ENCODE measurements at regions of chr13 and their contacts with region 1.

Region 1: GRCh38 chr13:106536244-106537034 is 977 bp upstream of the EFNB2 start:
- DNase-seq: peak; percentile 88 to 93
- H3K4me3 ChIP-seq: peak overlapping the region; percentile 93
- H3K4me3 Mint-ChIP-seq: peak overlapping the region; percentile 97
- H3K27ac Mint-ChIP-seq: peak overlapping the region; percentile 94
- H3K4me1 ChIP-seq: peaks cover 7% of the 10 kb centered on the region
- H3K4me1 Mint-ChIP-seq: peaks cover 7% of the 10 kb centered on the region
- H3K27me3 ChIP-seq: no peaks in the 10 kb centered on the region
- H3K27me3 Mint-ChIP-seq: no peaks in the 10 kb centered on the region
- CTCF ChIP-seq: peak; percentile 93 to 98

Region 2: GRCh38 chr13:104571161-104571892 is 1965.1 kb before region 1 on chr13:
- CTCF ChIA-PET with region 1: no interaction called
- POLR2A ChIA-PET with region 1: no interaction called
- intact Hi-C with region 1: loop called (anchors 1 kb)
- DNase-seq: peak; percentile 71 to 73
- H3K4me3 ChIP-seq: no peak overlapping the region
- H3K4me3 Mint-ChIP-seq: no peak overlapping the region
- H3K27ac Mint-ChIP-seq: no peak overlapping the region
- H3K4me1 ChIP-seq: no peaks in the 10 kb centered on the region
- H3K4me1 Mint-ChIP-seq: no peaks in the 10 kb centered on the region
- H3K27me3 ChIP-seq: 0 out of 2 replicates have a peak, but pooled peaks cover 1% of the 10 kb centered on the region
- H3K27me3 Mint-ChIP-seq: peaks cover 4% of the 10 kb centered on the region
- CTCF ChIP-seq: peak; percentile 68 to 73

Region 3: GRCh38 chr13:105410602-105411001 is 1125.8 kb before region 1 on chr13:
- CTCF ChIA-PET with region 1: interaction called, 7 read pairs
- POLR2A ChIA-PET with region 1: no interaction called
- intact Hi-C with region 1: loop called (anchors 1 kb)
- DNase-seq: peak; percentile 60 to 76
- H3K4me3 ChIP-seq: no peak overlapping the region
- H3K4me3 Mint-ChIP-seq: no peak overlapping the region
- H3K27ac Mint-ChIP-seq: no peak overlapping the region
- H3K4me1 ChIP-seq: no peaks in the 10 kb centered on the region
- H3K4me1 Mint-ChIP-seq: no peaks in the 10 kb centered on the region
- H3K27me3 ChIP-seq: no peaks in the 10 kb centered on the region
- H3K27me3 Mint-ChIP-seq: no peaks in the 10 kb centered on the region
- CTCF ChIP-seq: peak; percentile 62 to 79

Region 4: GRCh38 chr13:105817021-105817420 is 719.4 kb before region 1 on chr13:
- CTCF ChIA-PET with region 1: no interaction called
- POLR2A ChIA-PET with region 1: no interaction called
- intact Hi-C with region 1: loop called (anchors 5 kb)
- DNase-seq: peak; percentile 62 to 75
- H3K4me3 ChIP-seq: no peak overlapping the region
- H3K4me3 Mint-ChIP-seq: peak overlapping the region; percentile 38
- H3K27ac Mint-ChIP-seq: peak overlapping the region; percentile 97
- H3K4me1 ChIP-seq: peaks cover 28% of the 10 kb centered on the region
- H3K4me1 Mint-ChIP-seq: peaks cover 23% of the 10 kb centered on the region
- H3K27me3 ChIP-seq: no peaks in the 10 kb centered on the region
- H3K27me3 Mint-ChIP-seq: no peaks in the 10 kb centered on the region
- CTCF ChIP-seq: no peak

Region 5: GRCh38 chr13:106471957-106472543 is 64.4 kb before region 1 on chr13:
- CTCF ChIA-PET with region 1: no interaction called
- POLR2A ChIA-PET with region 1: no interaction called
- intact Hi-C with region 1: loop called (anchors 2 kb)
- DNase-seq: peak; percentile 81 to 93
- H3K4me3 ChIP-seq: peak overlapping the region; percentile 27
- H3K4me3 Mint-ChIP-seq: peak overlapping the region; percentile 71
- H3K27ac Mint-ChIP-seq: peak overlapping the region; percentile 84
- H3K4me1 ChIP-seq: peaks cover 69% of the 10 kb centered on the region
- H3K4me1 Mint-ChIP-seq: peaks cover 48% of the 10 kb centered on the region
- H3K27me3 ChIP-seq: no peaks in the 10 kb centered on the region
- H3K27me3 Mint-ChIP-seq: no peaks in the 10 kb centered on the region
- CTCF ChIP-seq: no peak

Region 6: DNA sequence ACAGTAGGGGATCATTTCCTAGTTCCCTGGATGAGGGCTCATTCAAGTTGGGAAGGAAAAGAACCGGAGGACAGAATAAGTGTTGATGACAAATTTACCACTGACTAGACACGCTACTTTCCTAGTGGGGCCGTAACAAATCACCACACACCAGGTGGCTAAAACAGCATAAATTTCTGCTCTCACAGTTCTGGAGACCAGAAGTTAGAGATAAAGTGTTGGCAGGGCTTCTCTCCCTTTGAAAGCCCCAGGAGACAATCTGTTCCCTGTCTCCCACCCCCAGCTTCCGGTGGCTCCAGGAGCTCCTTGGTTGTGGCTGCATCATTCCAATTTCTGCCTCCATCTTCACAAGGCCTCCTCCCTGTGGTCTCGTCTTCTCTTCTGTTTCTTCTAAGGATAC is 96.9 kb after region 1 on chr13:
- CTCF ChIA-PET with region 1: no interaction called
- POLR2A ChIA-PET with region 1: no interaction called
- intact Hi-C with region 1: no loop called
- DNase-seq: no peak
- H3K4me3 ChIP-seq: no peak overlapping the region
- H3K4me3 Mint-ChIP-seq: no peak overlapping the region
- H3K27ac Mint-ChIP-seq: no peak overlapping the region
- H3K4me1 ChIP-seq: no peaks in the 10 kb centered on the region
- H3K4me1 Mint-ChIP-seq: no peaks in the 10 kb centered on the region
- H3K27me3 ChIP-seq: no peaks in the 10 kb centered on the region
- H3K27me3 Mint-ChIP-seq: no peaks in the 10 kb centered on the region
- CTCF ChIP-seq: no peak

Region 7: GRCh38 chr13:107124129-107124718 is 587.8 kb after region 1 on chr13:
- CTCF ChIA-PET with region 1: no interaction called
- POLR2A ChIA-PET with region 1: interaction called, 3 read pairs
- intact Hi-C with region 1: loop called (anchors 1 kb)
- DNase-seq: peak in 1 of 2 experiments; percentile 62
- H3K4me3 ChIP-seq: no peak overlapping the region
- H3K4me3 Mint-ChIP-seq: no peak overlapping the region
- H3K27ac Mint-ChIP-seq: no peak overlapping the region
- H3K4me1 ChIP-seq: peaks cover 60% of the 10 kb centered on the region
- H3K4me1 Mint-ChIP-seq: peaks cover 31% of the 10 kb centered on the region
- H3K27me3 ChIP-seq: no peaks in the 10 kb centered on the region
- H3K27me3 Mint-ChIP-seq: no peaks in the 10 kb centered on the region
- CTCF ChIP-seq: peak; percentile 53 to 64

Measured in Caco-2 (cell line).